A673 (cell line): ENCODE measurements at regions of chr1 and their contacts with region 1.

Region 1: DNA sequence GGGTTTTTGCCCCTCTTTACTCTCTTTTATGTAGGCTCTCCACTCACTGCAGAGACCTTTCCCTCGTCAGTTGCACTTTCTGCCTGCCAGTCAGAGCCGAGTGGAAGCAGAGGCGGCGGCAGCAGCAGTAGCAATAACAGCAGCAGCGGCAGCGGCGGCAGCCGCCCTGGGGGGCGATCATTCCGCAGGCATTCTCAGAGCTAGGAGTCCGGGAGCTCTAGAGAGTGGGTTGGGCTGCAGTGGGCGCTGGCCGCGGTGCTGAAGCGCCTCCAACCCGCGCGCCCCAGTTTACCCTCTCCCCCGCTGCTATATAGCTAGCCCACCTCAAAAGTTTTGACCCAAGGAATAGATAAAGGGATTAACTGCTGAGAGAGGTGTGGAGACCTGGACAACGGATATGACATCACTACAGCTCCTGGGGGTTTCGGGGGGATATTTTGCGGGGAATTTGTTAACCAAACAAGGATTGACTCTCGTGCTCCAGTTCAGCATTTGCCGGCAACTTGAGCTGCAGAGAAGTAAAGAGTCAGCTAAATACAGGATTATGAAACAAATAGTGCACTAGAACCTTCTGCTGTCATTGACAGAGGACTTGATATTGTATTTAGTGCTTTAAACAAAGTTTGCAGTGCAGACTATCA is at the start of gene OLFM3:
- DNase-seq: peak; percentile 94
- H3K4me3 ChIP-seq: peak within 1 kb of the TSS; percentile 74
- H3K27ac ChIP-seq: peak within 1 kb of the TSS; percentile 87
- H3K4me1 ChIP-seq: peaks cover 9% of the 10 kb centered on the region
- H3K27me3 ChIP-seq: no peaks in the 10 kb centered on the region
- CTCF ChIP-seq: no peak
- total RNA-seq, gene OLFM3: 85.0 and 88.7 TPM in 2 replicates

Region 2: GRCh38 chr1:101653482-101653946 is 343.4 kb before region 1 on chr1:
- CTCF ChIA-PET with region 1: interaction called, 5 read pairs
- POLR2A ChIA-PET with region 1: no interaction called
- intact Hi-C with region 1: loop called (anchors 1 kb)
- DNase-seq: peak; percentile 78
- H3K4me3 ChIP-seq: no peak overlapping the region
- H3K27ac ChIP-seq: no peak overlapping the region
- H3K4me1 ChIP-seq: peaks cover 7% of the 10 kb centered on the region
- H3K27me3 ChIP-seq: no peaks in the 10 kb centered on the region
- CTCF ChIP-seq: peak; percentile 78

Region 3: DNA sequence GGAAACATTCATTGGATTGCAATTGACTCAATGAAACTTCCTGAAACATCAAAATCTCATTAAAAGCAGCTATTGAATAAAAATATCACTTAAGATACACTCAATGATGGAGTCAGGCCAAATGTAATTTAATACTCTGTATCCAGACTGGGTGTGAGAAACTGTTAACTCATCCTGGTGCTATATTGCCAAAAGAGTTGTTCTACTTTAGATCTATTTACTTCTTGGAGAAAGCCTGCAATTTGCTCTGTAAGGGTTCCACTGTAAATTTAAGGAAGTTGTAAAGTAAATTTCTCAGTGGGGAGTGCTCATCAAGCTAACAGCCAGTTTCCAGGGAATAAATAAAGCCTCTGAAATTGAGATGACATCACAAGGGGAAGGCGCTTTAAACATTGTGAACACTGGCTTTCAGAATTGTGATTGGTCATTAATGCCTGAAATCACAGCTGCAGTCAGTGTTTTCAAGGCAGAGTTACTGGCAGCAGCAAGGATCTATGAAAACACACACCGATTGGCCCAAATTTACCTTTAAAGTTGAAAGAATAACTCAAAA is 91.6 kb before region 1 on chr1:
- CTCF ChIA-PET with region 1: no interaction called
- POLR2A ChIA-PET with region 1: no interaction called
- intact Hi-C with region 1: loop called (anchors 1 kb)
- DNase-seq: peak; percentile 99
- H3K4me3 ChIP-seq: peak overlapping the region; percentile 17
- H3K27ac ChIP-seq: peak overlapping the region; percentile 70
- H3K4me1 ChIP-seq: peaks cover 74% of the 10 kb centered on the region
- H3K27me3 ChIP-seq: no peaks in the 10 kb centered on the region
- CTCF ChIP-seq: no peak

Region 4: GRCh38 chr1:102434421-102434820 is 437.5 kb after region 1 on chr1:
- CTCF ChIA-PET with region 1: no interaction called
- POLR2A ChIA-PET with region 1: no interaction called
- intact Hi-C with region 1: loop called (anchors 2 kb)
- DNase-seq: peak; percentile 76
- H3K4me3 ChIP-seq: no peak overlapping the region
- H3K27ac ChIP-seq: no peak overlapping the region
- H3K4me1 ChIP-seq: no peaks in the 10 kb centered on the region
- H3K27me3 ChIP-seq: no peaks in the 10 kb centered on the region
- CTCF ChIP-seq: peak; percentile 81